K562 (cell line): ENCODE measurements at regions of chr11 and their contacts with region 1.

Region 1: DNA sequence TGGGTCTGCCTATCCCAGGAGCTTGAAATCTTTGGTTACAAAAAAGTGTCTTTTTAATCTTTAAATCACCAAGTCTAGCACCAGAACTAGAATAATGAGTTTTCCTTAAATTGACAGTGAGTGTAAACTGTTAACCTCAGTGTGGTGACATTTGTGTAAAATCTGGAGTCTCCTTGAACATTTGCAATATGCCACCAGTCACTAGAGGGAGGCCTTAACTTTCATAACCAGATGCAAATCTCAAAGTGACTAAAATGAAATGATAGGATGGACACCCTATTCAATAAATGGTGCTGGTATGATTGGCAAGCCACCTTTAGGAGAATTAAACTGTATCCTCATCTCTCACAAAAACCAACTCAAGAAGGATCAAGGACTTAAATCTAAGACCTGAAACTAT is 8.3 kb upstream of the SCGB1D2 start:
- DNase-seq: no peak
- ATAC-seq: no peak
- H3K4me3 ChIP-seq: no peak overlapping the region
- H3K27ac ChIP-seq: no peak overlapping the region
- H3K4me1 ChIP-seq: no peaks in the 10 kb centered on the region
- H3K27me3 ChIP-seq: peaks cover 0 to 9% of the 10 kb centered on the region in 2 experiments; a peak in 1 of 5 replicates
- CTCF ChIP-seq: peak in 2 of 3 experiments; percentile 21 to 46; a peak in 3 of 6 replicates
- EP300 ChIP-seq: no peak
- POLR2A ChIP-seq: no peak
- RAD21 ChIP-seq: peak in 1 of 2 experiments; percentile 53; a peak in 3 of 4 replicates

Region 2: GRCh38 chr11:62309991-62310390 is 76.3 kb after region 1 on chr11:
- CTCF ChIA-PET with region 1: interaction called, 3 read pairs
- POLR2A ChIA-PET with region 1: no interaction called
- in situ Hi-C with region 1: no loop called
- intact Hi-C with region 1: loop called (anchors 5 kb)
- DNase-seq: no peak
- ATAC-seq: no peak
- H3K4me3 ChIP-seq: no peak overlapping the region
- H3K27ac ChIP-seq: no peak overlapping the region
- H3K4me1 ChIP-seq: peaks cover 0 to 4% of the 10 kb centered on the region in 2 experiments; a peak in 1 of 5 replicates
- H3K27me3 ChIP-seq: peaks cover 7 to 18% of the 10 kb centered on the region in 2 experiments; a peak in 3 of 5 replicates
- CTCF ChIP-seq: no peak
- EP300 ChIP-seq: no peak
- POLR2A ChIP-seq: no peak
- RAD21 ChIP-seq: no peak